ENCODE measurements at regions of chr16 and their contacts with region 1.

Region 1: DNA sequence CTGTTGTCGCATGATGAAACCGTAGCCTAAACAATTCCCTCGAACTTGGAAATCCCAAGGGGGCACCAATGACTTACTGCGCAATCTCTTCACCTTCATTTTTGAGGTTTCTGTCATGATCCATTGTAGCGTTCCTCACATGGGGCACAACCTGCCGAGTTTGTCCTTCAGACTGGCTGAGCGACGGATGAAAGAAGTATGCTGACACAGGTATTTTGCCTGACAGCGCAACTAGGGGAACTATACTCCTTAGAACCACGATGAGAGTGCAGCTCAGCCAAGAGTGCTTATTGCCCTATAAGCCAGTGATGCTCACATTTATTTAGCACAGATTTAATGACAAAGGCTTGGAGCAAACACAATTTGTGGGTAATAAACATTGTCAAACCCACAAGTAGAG is 106.3 kb upstream of the ZNF267 start:
- DNase-seq: no peak
- H3K4me3 ChIP-seq: no peak overlapping the region
- H3K27ac ChIP-seq: no peak overlapping the region
- H3K4me1 ChIP-seq: no peaks in the 10 kb centered on the region
- H3K27me3 ChIP-seq: no peaks in the 10 kb centered on the region
- CTCF ChIP-seq: no peak
- POLR2A ChIP-seq: no peak

Region 2: GRCh38 chr16:31238041-31238440 is 529.2 kb before region 1 on chr16:
- CTCF ChIA-PET with region 1: no interaction called
- POLR2A ChIA-PET with region 1: no interaction called
- dilution Hi-C with region 1: no loop called
- intact Hi-C with region 1: loop called (anchors 5 kb)
- DNase-seq: no peak
- H3K4me3 ChIP-seq: no peak overlapping the region
- H3K27ac ChIP-seq: no peak overlapping the region
- H3K4me1 ChIP-seq: no peaks in the 10 kb centered on the region
- H3K27me3 ChIP-seq: peaks cover 2 to 5% of the 10 kb centered on the region in 2 experiments
- CTCF ChIP-seq: no peak
- POLR2A ChIP-seq: no peak

Region 3: DNA sequence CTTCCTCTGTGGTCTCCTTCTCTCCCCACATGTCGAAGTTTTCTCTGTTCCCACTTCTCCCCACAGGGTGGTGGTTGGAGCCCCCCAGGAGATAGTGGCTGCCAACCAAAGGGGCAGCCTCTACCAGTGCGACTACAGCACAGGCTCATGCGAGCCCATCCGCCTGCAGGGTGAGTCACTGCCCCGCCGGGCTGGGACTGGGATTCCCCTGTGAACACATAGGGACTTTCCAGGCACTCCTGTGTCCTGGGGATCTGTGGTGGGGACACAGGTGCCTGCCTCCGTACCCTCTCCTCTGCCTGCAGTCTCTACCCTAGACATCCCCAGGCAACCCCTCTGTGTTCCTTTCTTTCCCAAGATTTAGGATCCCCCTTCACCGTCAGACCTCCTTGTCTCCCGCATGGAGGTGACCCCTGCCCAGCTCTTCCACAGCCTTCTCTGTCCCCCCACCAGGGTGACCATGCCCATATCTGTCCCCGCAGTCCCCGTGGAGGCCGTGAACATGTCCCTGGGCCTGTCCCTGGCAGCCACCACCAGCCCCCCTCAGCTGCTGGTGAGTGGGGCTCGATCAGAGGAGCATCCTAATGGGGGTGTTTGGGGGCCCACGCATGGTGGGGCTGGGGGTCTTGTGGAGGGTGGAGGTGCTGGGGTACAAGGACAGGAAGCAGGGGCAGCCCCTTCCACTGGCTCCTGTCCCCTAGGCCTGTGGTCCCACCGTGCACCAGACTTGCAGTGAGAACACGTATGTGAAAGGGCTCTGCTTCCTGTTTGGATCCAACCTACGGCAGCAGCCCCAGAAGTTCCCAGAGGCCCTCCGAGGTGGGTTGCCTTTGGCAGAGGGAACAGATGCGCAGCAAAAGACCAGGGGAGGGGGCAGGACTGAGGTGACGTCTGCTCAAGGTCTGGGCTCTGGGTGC is 501.7 kb before region 1 on chr16:
- CTCF ChIA-PET with region 1: no interaction called
- POLR2A ChIA-PET with region 1: no interaction called
- dilution Hi-C with region 1: no loop called
- intact Hi-C with region 1: no loop called
- DNase-seq: peak; percentile 6
- H3K4me3 ChIP-seq: no peak overlapping the region
- H3K27ac ChIP-seq: no peak overlapping the region
- H3K4me1 ChIP-seq: no peaks in the 10 kb centered on the region
- H3K27me3 ChIP-seq: no peaks in the 10 kb centered on the region
- CTCF ChIP-seq: no peak
- POLR2A ChIP-seq: no peak

Region 4: GRCh38 chr16:31745900-31746299 is 21.4 kb before region 1 on chr16:
- CTCF ChIA-PET with region 1: no interaction called
- POLR2A ChIA-PET with region 1: no interaction called
- dilution Hi-C with region 1: no loop called
- intact Hi-C with region 1: no loop called
- DNase-seq: no peak
- H3K4me3 ChIP-seq: no peak overlapping the region
- H3K27ac ChIP-seq: no peak overlapping the region
- H3K4me1 ChIP-seq: no peaks in the 10 kb centered on the region
- H3K27me3 ChIP-seq: no peaks in the 10 kb centered on the region
- CTCF ChIP-seq: no peak
- POLR2A ChIP-seq: no peak

Measured in endothelial cell of umbilical vein (primary cell).